ENCODE measurements at regions of chr4 and their contacts with region 1.

Region 1: GRCh38 chr4:121192480-121192879 is 28.4 kb upstream of the TNIP3 start:
- DNase-seq: peak; percentile 15
- H3K4me3 ChIP-seq: peak overlapping the region; percentile 45
- H3K27ac ChIP-seq: no peak overlapping the region
- H3K27me3 ChIP-seq: no peaks in the 10 kb centered on the region
- CTCF ChIP-seq: peak; percentile 83

Region 2: DNA sequence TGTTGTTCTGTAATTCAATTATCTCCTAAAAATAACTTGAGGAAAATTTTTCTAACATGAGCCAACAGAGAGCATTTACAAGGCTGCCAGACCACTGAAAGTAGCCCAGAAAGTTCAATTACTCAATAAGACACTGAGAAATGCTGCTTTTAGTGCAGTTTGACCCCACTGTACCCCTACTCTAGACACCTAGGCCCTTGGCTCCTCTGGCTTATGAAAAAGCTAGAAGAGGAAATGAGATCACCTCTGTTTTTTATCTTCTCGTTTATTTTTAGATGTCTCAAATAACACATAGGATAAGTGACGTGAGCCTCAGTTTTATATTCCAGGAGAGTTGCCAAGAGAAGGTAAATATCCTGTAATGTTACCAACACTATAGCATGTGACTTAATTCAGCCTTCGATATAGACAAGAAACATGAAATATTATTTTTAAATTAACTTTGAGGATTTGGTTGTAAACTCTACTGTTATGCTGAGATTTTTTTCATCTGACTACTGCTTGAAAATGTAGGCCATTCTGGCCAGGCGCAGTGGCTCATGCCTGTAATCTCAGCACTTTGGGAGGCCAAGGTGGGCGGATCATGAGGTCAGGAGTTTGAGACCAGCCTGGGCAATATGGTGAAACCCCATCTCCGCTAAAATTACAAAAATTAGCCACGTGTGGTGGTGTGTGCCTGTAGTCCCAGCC is 52.8 kb before region 1 on chr4:
- CTCF ChIA-PET with region 1: interaction called, 11 read pairs
- POLR2A ChIA-PET with region 1: no interaction called
- DNase-seq: peak; percentile 44
- H3K4me3 ChIP-seq: no peak overlapping the region
- H3K27ac ChIP-seq: peak overlapping the region; percentile 75
- H3K27me3 ChIP-seq: no peaks in the 10 kb centered on the region
- CTCF ChIP-seq: no peak

Region 3: DNA sequence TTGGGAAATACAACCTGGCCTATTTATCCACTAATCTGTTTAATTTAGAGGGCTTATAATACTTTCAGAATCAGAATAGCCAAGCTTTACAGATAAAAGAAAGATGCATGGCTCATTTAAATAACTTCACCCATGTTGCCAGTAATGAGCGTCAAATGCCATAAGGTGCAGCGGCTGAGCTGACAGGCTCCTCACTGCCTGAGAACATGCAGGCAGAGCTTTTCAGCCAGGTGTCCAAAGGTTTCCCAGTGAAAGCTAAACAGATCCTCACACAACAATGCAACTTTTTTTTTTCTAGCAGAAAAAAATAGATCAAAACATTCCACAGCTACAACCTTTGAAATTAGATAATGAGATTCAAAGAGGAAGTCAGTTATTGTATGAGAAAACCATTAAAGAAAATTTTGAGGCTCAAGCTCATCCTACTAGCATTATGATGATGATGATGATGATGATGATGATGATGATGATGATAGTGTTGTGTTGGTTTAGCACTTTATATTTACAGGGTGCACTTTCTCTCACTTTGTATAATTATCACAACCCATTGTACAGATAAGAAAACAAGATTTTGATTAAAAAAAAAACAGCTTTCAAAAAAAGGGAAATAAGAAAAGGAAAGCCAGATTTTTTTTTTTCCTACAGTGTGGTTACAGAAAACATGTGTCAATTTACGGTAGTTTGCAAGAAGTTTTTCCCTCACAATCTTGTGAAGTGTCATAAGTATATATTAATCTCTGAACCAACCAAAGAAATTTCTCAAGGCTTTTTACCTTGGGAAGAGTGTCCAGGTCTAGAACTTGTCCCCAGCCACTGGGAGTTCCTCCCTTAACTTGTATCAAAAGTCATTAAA is 16.2 kb before region 1 on chr4:
- CTCF ChIA-PET with region 1: interaction called, 19 read pairs
- POLR2A ChIA-PET with region 1: no interaction called
- DNase-seq: no peak
- H3K4me3 ChIP-seq: no peak overlapping the region
- H3K27ac ChIP-seq: no peak overlapping the region
- H3K27me3 ChIP-seq: no peaks in the 10 kb centered on the region
- CTCF ChIP-seq: no peak

Region 4: GRCh38 chr4:121209171-121209570 is 16.7 kb after region 1 on chr4:
- CTCF ChIA-PET with region 1: interaction called, 45 read pairs
- POLR2A ChIA-PET with region 1: no interaction called
- DNase-seq: no peak
- H3K4me3 ChIP-seq: no peak overlapping the region
- H3K27ac ChIP-seq: no peak overlapping the region
- H3K27me3 ChIP-seq: no peaks in the 10 kb centered on the region
- CTCF ChIP-seq: no peak

Region 5: GRCh38 chr4:121227341-121227792 is 34.9 kb after region 1 on chr4:
- CTCF ChIA-PET with region 1: interaction called, 38 read pairs
- POLR2A ChIA-PET with region 1: no interaction called
- DNase-seq: no peak
- H3K4me3 ChIP-seq: no peak overlapping the region
- H3K27ac ChIP-seq: no peak overlapping the region
- H3K27me3 ChIP-seq: no peaks in the 10 kb centered on the region
- CTCF ChIP-seq: no peak

Region 6: DNA sequence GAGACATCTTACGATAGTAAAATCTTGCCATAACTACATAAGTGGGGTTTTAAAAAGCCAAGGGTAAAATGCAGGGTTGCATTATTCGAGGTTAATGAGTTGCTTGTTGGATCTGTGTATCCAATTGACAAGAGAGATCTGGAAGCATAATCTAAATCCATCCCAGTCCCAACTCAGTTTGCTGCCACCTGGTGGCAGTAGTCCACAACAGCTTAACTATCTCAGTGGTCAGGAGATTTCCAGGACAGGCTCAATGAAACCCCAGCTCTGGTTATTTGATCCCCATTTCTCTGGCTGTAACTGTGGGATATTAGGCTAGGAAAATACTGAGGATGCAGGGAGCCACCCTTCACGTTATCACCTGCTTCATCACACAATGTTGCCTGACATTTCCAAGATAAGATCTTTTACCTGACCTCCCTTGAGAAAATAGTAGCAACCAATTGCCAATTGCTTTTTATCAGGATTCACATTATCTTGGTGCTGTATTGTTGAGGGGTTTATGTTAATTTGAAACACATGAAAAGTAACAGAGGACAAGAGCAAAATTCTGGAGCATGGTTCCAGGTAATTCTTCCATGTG is 59.8 kb after region 1 on chr4:
- CTCF ChIA-PET with region 1: interaction called, 299 read pairs
- POLR2A ChIA-PET with region 1: no interaction called
- DNase-seq: peak; percentile 50
- H3K4me3 ChIP-seq: no peak overlapping the region
- H3K27ac ChIP-seq: no peak overlapping the region
- H3K27me3 ChIP-seq: peaks cover 3% of the 10 kb centered on the region
- CTCF ChIP-seq: peak; percentile 89

Region 7: GRCh38 chr4:121307445-121308327 is 115.2 kb after region 1 on chr4:
- CTCF ChIA-PET with region 1: interaction called, 41 read pairs
- POLR2A ChIA-PET with region 1: no interaction called
- DNase-seq: no peak
- H3K4me3 ChIP-seq: no peak overlapping the region
- H3K27ac ChIP-seq: no peak overlapping the region
- H3K27me3 ChIP-seq: no peaks in the 10 kb centered on the region
- CTCF ChIP-seq: peak; percentile 82

Region 8: DNA sequence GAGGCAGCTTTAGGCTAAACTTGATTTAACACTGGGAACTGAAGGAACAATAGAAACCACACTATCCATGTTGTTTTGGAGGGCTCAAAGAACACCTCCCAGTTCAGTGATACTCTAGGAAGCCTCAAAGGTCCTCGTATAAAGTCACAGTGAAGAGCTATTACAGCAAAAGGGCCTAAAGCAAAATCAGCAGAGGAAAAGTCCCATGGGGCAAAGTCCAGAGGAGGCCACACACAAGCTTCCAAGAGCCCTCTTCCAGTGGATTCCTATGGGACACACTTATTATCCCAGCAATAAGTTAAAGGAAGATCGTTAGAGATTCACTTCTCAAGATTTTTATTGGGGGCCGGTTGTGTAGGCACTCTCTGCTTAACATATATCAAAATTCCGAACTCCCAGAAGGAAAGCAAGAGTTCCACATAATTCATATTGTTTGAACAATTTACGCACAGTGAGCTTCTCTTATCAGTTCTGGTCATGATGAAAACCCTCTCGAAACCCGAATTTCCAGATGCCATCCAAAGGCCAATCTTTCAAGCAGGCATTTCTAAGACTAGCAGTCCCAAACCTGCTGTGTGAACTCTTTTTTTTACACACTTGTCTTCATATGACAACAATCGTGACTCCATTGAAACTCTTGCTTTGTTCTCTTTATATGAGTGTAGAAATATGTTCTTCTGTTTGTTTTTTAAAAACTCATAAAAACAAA is 450.6 kb after region 1 on chr4:
- CTCF ChIA-PET with region 1: no interaction called
- POLR2A ChIA-PET with region 1: no interaction called
- DNase-seq: no peak
- H3K4me3 ChIP-seq: no peak overlapping the region
- H3K27ac ChIP-seq: no peak overlapping the region
- H3K27me3 ChIP-seq: no peaks in the 10 kb centered on the region
- CTCF ChIP-seq: no peak